ENCODE measurements at regions of chrX and their contacts with region 1.

Region 1: DNA sequence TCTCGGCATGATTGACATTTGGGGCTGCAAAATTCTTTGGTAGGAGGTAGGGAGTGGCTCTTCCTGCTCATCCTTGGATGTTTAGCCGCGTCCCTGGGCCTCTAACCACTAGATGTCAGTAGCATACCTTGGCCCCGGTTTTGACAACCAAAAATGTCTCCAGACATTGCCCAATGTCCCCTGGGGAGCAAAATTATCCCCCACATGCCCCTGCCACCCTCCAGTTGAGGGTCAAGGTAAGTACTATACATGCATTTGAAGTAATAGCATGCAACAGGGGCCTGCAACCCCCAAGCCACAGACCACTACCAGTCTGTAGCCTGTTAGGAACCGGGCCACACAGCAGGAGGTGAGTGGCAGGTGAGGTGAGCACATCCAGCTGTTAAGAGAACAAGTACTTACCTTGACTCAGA is 17.6 kb upstream of the KIAA1210 start:
- DNase-seq: no peak
- ATAC-seq: peak in 1 of 2 donors; percentile 25

Region 2: GRCh38 chrX:119222932-119223331 is 77.7 kb after region 1 on chrX:
- intact Hi-C with region 1: loop called in 1 of 2 experiments (anchors 2 kb)
- DNase-seq: no peak
- ATAC-seq: no peak